ENCODE measurements at regions of chr14 and their contacts with region 1.

Region 1: DNA sequence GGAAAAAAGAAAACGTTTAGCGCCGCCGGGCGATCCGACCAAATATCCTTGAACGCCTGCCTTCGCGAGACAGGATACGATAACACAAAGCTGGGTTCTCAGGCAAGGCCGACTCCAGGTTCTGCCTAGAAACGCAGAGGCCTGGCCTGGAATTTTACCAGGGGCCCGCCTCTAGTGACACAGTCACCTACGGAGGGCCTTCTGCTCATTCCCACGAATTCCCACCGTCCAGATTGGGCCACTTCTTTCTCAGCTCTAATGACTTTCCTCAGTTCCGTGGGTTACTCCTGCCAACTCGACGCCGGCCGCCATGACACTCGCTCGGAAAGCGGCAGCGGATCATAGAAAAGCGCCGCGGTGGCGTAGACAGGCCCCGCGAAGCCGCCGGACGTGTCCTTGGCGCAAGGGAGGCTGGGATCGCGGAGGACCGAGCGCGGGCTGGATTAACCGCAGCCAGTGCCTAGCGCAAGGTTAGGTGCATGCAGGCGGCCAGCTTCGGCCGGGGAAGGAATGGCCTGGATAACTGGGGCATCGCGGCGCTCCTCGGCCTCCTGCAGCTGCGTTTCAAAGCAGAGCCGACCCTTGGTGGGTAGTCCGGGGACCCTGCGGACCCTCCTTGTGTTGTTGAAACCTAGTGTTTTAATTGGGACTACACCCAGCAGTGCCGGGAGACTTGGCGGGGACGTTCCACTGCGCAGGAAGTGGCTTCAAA is at the start of gene TRIP11:
- DNase-seq: peak; percentile 91 to 98 (median 95)
- H3K4me3 ChIP-seq: peak within 1 kb of the TSS; percentile 59 to 100 (median 86)
- H3K27ac ChIP-seq: peak within 1 kb of the TSS; percentile 51 to 98 (median 94)
- H3K27me3 ChIP-seq: no peaks in the 10 kb centered on the region
- CTCF ChIP-seq: peak in 47 of 56 donors; percentile 10 to 67 (median 38)
- total RNA-seq, gene TRIP11: 38.7 to 75.7 (median 58.3) TPM

Region 2: GRCh38 chr14:91510174-91511042 is 529.5 kb before region 1 on chr14 and contains the start of gene PPP4R3A:
- intact Hi-C with region 1: loop called (anchors 2 to 5 kb)
- DNase-seq: peak; percentile 84 to 96 (median 93)
- H3K4me3 ChIP-seq: peak within 1 kb of the TSS; percentile 71 to 99 (median 91)
- H3K27ac ChIP-seq: peak within 1 kb of the TSS; percentile 92 to 100 (median 99)
- H3K27me3 ChIP-seq: no peaks in the 10 kb centered on the region
- CTCF ChIP-seq: peak in 25 of 56 donors; percentile 2 to 45 (median 17)
- total RNA-seq, gene PPP4R3A: 47.0 to 113 (median 64.2) TPM

Region 3: DNA sequence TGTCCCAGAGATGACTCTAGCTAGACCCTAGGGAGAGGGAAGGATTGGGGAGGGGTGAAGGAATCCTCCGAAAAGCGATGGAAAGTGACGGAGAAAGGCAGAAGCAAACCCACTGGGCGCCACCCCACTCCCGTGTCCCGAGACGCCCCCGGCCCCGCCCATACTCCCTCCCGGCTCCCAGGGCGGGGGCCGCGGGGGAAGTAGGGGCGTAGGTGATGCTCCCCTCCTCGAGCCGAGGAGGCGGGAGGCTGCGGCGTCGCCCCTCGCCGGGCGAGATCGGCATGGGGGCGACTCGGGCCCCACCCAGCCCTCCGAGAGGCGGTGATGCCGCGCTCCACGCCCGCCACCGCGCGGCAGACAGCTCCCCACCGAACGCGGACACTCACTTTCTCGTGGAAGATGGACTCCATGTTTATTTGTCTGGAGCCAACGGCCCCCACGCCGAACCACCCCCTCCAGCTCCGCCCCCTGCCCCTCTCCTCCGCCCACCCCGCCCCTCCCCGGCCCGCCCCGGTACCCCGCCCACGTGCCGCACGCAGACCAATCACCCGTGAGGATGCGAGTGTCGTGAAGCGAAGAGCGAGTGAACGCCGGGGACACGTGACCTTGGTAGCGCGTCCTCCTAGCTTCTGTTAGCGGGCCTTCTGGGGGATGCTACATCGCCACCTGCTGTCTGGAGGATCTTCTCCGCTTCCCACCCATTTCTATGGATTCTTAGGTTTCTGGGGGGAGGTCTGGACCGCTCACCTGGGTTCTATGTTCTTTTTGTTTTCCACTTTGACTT is 66.5 kb after region 1 on chr14 and contains the start of gene ATXN3:
- intact Hi-C with region 1: loop called (anchors 1 to 2 kb)
- DNase-seq: peak; percentile 96 to 99 (median 98)
- H3K4me3 ChIP-seq: peak within 1 kb of the TSS; percentile 58 to 100 (median 93)
- H3K27ac ChIP-seq: peak within 1 kb of the TSS; percentile 75 to 99 (median 95)
- H3K27me3 ChIP-seq: no peaks in the 10 kb centered on the region
- CTCF ChIP-seq: peak; percentile 70 to 94 (median 85)
- total RNA-seq, gene ATXN3: 31.2 to 63.2 (median 46.6) TPM

Region 4: GRCh38 chr14:92121670-92122350 is 81.9 kb after region 1 on chr14 and contains the starts of genes CPSF2 and NDUFB1:
- intact Hi-C with region 1: loop called (anchors 5 kb)
- DNase-seq: peak; percentile 72 to 91 (median 88)
- H3K4me3 ChIP-seq: peak within 1 kb of the TSS; percentile 72 to 99 (median 94)
- H3K27ac ChIP-seq: peak within 1 kb of the TSS; percentile 69 to 99 (median 96)
- H3K27me3 ChIP-seq: no peaks in the 10 kb centered on the region
- CTCF ChIP-seq: peak in 34 of 56 donors; percentile 2 to 52 (median 26)
- total RNA-seq, gene CPSF2: 26.8 to 56.4 (median 40.4) TPM
- total RNA-seq, gene NDUFB1: 64.8 to 207 (median 138) TPM